Activated T-helper 2 cell treated with anti-CD3 and anti-CD28 coated beads, Interferon-gamma antibody, Interleukin-2, Interleukin-4, amounts not matched to agents 10 μg/mL and 5 μg/mL and 100 μg/mL, durations not matched to agents 14 hours and 24 hours and 36 hours (primary cell): ENCODE measurements at regions of chr14 and their contacts with region 1.

Region 1: DNA sequence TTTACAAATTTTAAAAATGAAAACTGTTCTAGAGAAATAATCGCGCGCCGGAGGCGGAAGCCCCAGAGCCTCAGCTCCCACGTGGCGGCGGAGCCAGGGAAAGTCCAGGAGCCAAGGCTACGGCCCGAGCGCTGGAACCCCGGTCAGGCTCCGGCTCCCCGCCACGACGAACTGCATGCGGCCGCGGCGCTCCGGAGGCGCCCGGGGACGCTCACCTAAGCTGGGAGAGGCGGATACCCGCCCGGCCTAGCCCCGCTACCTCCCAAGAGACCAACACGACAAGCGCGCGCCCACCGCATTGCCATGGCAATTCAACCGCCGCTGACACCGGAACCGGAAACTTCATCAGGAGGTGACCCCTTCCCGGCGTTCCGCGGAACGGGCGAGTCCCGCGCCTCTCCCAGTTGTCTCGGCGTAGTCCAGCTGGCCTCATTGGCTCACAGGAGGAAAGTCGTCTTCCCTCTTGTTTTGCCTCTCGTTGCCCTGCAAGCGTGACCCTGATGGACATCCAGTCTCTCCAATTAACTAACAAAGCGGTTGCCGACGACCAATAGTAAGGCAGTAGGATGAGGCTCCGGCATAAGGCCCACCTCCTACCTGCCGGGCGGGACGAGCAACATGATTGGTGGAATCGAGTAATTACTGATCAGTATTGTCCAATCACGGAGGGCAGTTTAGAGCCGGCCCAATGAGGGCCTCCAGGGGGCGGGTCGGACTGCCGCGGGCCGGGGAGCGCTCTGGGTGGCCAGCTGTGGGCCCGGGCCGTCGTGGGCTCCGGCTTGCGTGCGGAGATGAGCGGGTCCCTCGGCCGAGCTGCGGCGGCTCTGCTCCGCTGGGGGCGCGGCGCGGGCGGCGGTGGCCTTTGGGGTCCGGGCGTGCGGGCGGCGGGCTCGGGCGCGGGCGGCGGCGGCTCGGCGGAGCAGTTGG is at the start of gene GLRX5:
- DNase-seq: peak; percentile 99
- H3K4me3 Mint-ChIP-seq: peak within 1 kb of the TSS; percentile 99
- H3K27ac Mint-ChIP-seq: peak within 1 kb of the TSS; percentile 92
- H3K4me1 Mint-ChIP-seq: peaks cover 51% of the 10 kb centered on the region
- H3K27me3 Mint-ChIP-seq: no peaks in the 10 kb centered on the region
- total RNA-seq, gene GLRX5: 32.4 and 39.4 TPM in 2 replicates

Region 2: GRCh38 chr14:95442633-95443021 is 91.9 kb before region 1 on chr14:
- intact Hi-C with region 1: loop called (anchors 2 kb)
- DNase-seq: peak; percentile 57
- H3K4me3 Mint-ChIP-seq: no peak overlapping the region
- H3K27ac Mint-ChIP-seq: peak overlapping the region; percentile 19
- H3K4me1 Mint-ChIP-seq: peaks cover 3% of the 10 kb centered on the region
- H3K27me3 Mint-ChIP-seq: no peaks in the 10 kb centered on the region

Region 3: DNA sequence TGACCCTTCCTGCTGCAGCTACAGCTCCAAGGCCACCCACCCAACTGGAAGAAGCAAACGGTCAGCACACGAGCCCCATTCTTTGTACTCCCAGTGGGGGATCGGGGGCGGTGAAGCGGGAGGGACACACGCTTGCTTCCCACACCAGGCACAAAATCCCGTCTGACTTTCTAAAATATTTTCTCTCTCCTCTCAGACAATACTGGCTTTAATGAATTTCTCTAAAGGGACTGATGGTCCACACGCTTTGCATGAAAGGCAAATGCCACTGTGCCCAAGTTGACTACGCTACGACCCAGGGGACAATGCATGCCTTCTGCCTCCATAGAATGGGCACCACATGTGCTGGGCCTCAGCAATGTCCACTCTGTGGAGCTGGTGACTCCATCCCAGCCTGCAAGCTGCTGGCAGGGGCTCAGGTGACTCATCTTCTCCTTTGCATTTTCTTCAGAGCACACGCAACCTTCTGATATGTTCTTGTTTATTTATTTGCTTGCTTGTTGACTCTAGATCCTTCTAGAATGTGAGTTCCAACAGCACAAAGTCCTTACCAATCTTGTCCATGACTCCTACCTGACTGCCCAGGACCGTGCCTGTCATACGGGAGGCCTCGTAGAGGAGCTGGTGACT is 33.7 kb before region 1 on chr14:
- intact Hi-C with region 1: no loop called
- DNase-seq: no peak
- H3K4me3 Mint-ChIP-seq: no peak overlapping the region
- H3K27ac Mint-ChIP-seq: peak overlapping the region; percentile 64
- H3K4me1 Mint-ChIP-seq: peaks cover 71% of the 10 kb centered on the region
- H3K27me3 Mint-ChIP-seq: no peaks in the 10 kb centered on the region

Region 4: GRCh38 chr14:95515596-95516552 is 18.7 kb before region 1 on chr14:
- intact Hi-C with region 1: loop called (anchors 1 kb)
- DNase-seq: peak; percentile 81
- H3K4me3 Mint-ChIP-seq: peak overlapping the region; percentile 92
- H3K27ac Mint-ChIP-seq: peak overlapping the region; percentile 89
- H3K4me1 Mint-ChIP-seq: peaks cover 62% of the 10 kb centered on the region
- H3K27me3 Mint-ChIP-seq: no peaks in the 10 kb centered on the region

Region 5: GRCh38 chr14:95577067-95577800 is 42.7 kb after region 1 on chr14:
- intact Hi-C with region 1: no loop called
- DNase-seq: no peak
- H3K4me3 Mint-ChIP-seq: no peak overlapping the region
- H3K27ac Mint-ChIP-seq: no peak overlapping the region
- H3K4me1 Mint-ChIP-seq: no peaks in the 10 kb centered on the region
- H3K27me3 Mint-ChIP-seq: no peaks in the 10 kb centered on the region